CD8-positive, alpha-beta T cell (primary cell): ENCODE measurements at regions of chr14 and their contacts with region 1.

Region 1: GRCh38 chr14:91350813-91351511 is 66.7 kb downstream of the CCDC88C start:
- DNase-seq: peak in 6 of 9 experiments; percentile 52 to 91 (median 72)
- ATAC-seq: peak; percentile 60
- H3K4me3 ChIP-seq: peak overlapping the region; percentile 27 to 39
- H3K4me3 Mint-ChIP-seq: peak overlapping the region; percentile 86
- H3K27ac ChIP-seq: peak overlapping the region; percentile 45 to 83
- H3K27ac Mint-ChIP-seq: peak overlapping the region; percentile 94
- H3K4me1 ChIP-seq: peaks cover 89% of the 10 kb centered on the region
- H3K4me1 Mint-ChIP-seq: peaks cover 90% of the 10 kb centered on the region
- H3K27me3 ChIP-seq: no peaks in the 10 kb centered on the region
- H3K27me3 Mint-ChIP-seq: no peaks in the 10 kb centered on the region
- CTCF ChIP-seq: no peak

Region 2: GRCh38 chr14:91332151-91332985 is 18.6 kb before region 1 on chr14:
- CTCF ChIA-PET with region 1: interaction called, 161 read pairs
- POLR2A ChIA-PET with region 1: interaction called, 11 read pairs
- intact Hi-C with region 1: no loop called
- DNase-seq: no peak
- ATAC-seq: no peak
- H3K4me3 ChIP-seq: no peak overlapping the region
- H3K4me3 Mint-ChIP-seq: peak overlapping the region; percentile 29
- H3K27ac ChIP-seq: peak overlapping the region; percentile 33 to 95
- H3K27ac Mint-ChIP-seq: peak overlapping the region; percentile 99
- H3K4me1 ChIP-seq: peaks cover 63% of the 10 kb centered on the region
- H3K4me1 Mint-ChIP-seq: peaks cover 70% of the 10 kb centered on the region
- H3K27me3 ChIP-seq: no peaks in the 10 kb centered on the region
- H3K27me3 Mint-ChIP-seq: no peaks in the 10 kb centered on the region
- CTCF ChIP-seq: no peak

Region 3: DNA sequence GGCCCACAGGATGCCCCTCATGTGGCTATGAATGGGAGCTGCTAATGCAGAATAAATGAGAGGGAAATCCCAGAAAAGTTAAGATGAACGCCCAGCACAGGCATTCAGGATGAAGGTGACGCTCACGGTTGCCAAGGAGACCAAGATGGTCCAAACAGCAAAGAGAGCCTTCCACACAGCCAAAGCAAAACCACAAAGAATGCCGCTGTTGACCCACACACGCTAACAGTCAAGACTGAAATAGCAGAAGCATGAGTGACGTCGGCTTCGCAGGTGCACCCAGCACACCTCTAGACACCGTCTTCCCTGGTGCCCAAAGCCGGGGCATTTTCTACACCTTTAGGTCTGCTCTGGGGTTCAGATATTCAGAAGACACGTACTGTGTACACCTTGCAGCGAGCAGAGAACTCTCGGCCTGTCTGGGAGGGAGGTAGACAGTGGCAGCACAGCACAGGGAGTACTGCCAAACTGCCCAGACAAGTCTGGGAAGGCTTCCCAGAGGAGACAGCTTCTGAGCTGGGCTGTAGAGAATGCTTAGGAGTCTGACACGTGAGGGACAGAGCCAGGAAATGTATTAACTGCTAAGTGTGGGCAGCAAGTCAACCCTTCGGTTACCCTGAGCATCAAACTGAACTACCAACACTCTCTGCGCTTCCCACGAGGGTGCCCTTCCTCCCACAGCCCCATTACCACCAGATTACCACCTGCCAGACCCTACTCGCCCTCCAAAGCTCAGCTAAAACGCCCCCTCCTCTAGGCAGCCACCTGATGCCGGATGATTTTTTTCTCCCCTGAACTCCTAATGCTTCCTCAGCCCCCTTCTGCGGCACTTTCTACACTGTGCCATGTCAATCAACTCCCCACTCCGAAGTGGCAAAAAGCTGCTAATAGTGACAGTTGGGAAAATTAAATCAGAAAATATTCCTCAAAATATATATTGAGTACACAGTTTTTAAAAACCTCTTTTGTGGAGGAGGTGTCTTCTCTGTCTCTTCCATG is 16.5 kb after region 1 on chr14:
- CTCF ChIA-PET with region 1: interaction called, 120 read pairs
- POLR2A ChIA-PET with region 1: interaction called, 24 read pairs
- intact Hi-C with region 1: loop called in 1 of 2 experiments (anchors 1 kb)
- DNase-seq: peak in 7 of 9 experiments; percentile 41 to 96 (median 77)
- ATAC-seq: peak; percentile 77
- H3K4me3 ChIP-seq: peak overlapping the region; percentile 18 to 42
- H3K4me3 Mint-ChIP-seq: peak overlapping the region; percentile 73
- H3K27ac ChIP-seq: peak overlapping the region; percentile 67 to 79
- H3K27ac Mint-ChIP-seq: peak overlapping the region; percentile 93
- H3K4me1 ChIP-seq: peaks cover 97% of the 10 kb centered on the region
- H3K4me1 Mint-ChIP-seq: peaks cover 86% of the 10 kb centered on the region
- H3K27me3 ChIP-seq: no peaks in the 10 kb centered on the region
- H3K27me3 Mint-ChIP-seq: no peaks in the 10 kb centered on the region
- CTCF ChIP-seq: no peak

Region 4: GRCh38 chr14:91373591-91374254 is 22.8 kb after region 1 on chr14:
- CTCF ChIA-PET with region 1: interaction called, 120 read pairs
- POLR2A ChIA-PET with region 1: interaction called, 24 read pairs
- intact Hi-C with region 1: loop called in 1 of 2 experiments (anchors 2 kb)
- DNase-seq: peak in 7 of 9 experiments; percentile 38 to 87 (median 65)
- ATAC-seq: peak; percentile 53
- H3K4me3 ChIP-seq: peak overlapping the region; percentile 45 to 58
- H3K4me3 Mint-ChIP-seq: peak overlapping the region; percentile 87
- H3K27ac ChIP-seq: peak overlapping the region; percentile 57 to 79
- H3K27ac Mint-ChIP-seq: peak overlapping the region; percentile 95
- H3K4me1 ChIP-seq: peaks cover 98% of the 10 kb centered on the region
- H3K4me1 Mint-ChIP-seq: peaks cover 99% of the 10 kb centered on the region
- H3K27me3 ChIP-seq: no peaks in the 10 kb centered on the region
- H3K27me3 Mint-ChIP-seq: no peaks in the 10 kb centered on the region
- CTCF ChIP-seq: no peak

Region 5: GRCh38 chr14:91396959-91397815 is 46.2 kb after region 1 on chr14:
- CTCF ChIA-PET with region 1: interaction called, 49 read pairs
- POLR2A ChIA-PET with region 1: interaction called, 33 read pairs
- intact Hi-C with region 1: loop called in 1 of 2 experiments (anchors 5 kb)
- DNase-seq: peak in 7 of 9 experiments; percentile 58 to 81 (median 69)
- ATAC-seq: peak; percentile 55
- H3K4me3 ChIP-seq: peak overlapping the region; percentile 29 to 41
- H3K4me3 Mint-ChIP-seq: peak overlapping the region; percentile 81
- H3K27ac ChIP-seq: peak overlapping the region; percentile 42 to 78
- H3K27ac Mint-ChIP-seq: peak overlapping the region; percentile 90
- H3K4me1 ChIP-seq: peaks cover 92% of the 10 kb centered on the region
- H3K4me1 Mint-ChIP-seq: peaks cover 89% of the 10 kb centered on the region
- H3K27me3 ChIP-seq: no peaks in the 10 kb centered on the region
- H3K27me3 Mint-ChIP-seq: no peaks in the 10 kb centered on the region
- CTCF ChIP-seq: no peak

Region 6: GRCh38 chr14:91402771-91403600 is 52.0 kb after region 1 on chr14:
- CTCF ChIA-PET with region 1: interaction called, 49 read pairs
- POLR2A ChIA-PET with region 1: interaction called, 33 read pairs
- intact Hi-C with region 1: loop called (anchors 2 to 5 kb)
- DNase-seq: peak in 3 of 9 experiments; percentile 54 to 70 (median 60)
- ATAC-seq: peak; percentile 32
- H3K4me3 ChIP-seq: peak overlapping the region; percentile 39 to 43
- H3K4me3 Mint-ChIP-seq: peak overlapping the region; percentile 80
- H3K27ac ChIP-seq: peak overlapping the region; percentile 60 to 89
- H3K27ac Mint-ChIP-seq: peak overlapping the region; percentile 94
- H3K4me1 ChIP-seq: peaks cover 92% of the 10 kb centered on the region
- H3K4me1 Mint-ChIP-seq: peaks cover 88% of the 10 kb centered on the region
- H3K27me3 ChIP-seq: no peaks in the 10 kb centered on the region
- H3K27me3 Mint-ChIP-seq: no peaks in the 10 kb centered on the region
- CTCF ChIP-seq: no peak

Region 7: GRCh38 chr14:91493169-91493568 is 142.2 kb after region 1 on chr14:
- CTCF ChIA-PET with region 1: no interaction called
- POLR2A ChIA-PET with region 1: no interaction called
- intact Hi-C with region 1: no loop called
- DNase-seq: no peak
- ATAC-seq: no peak
- H3K4me3 ChIP-seq: no peak overlapping the region
- H3K4me3 Mint-ChIP-seq: no peak overlapping the region
- H3K27ac ChIP-seq: no peak overlapping the region
- H3K27ac Mint-ChIP-seq: no peak overlapping the region
- H3K4me1 ChIP-seq: peaks cover 55% of the 10 kb centered on the region
- H3K4me1 Mint-ChIP-seq: peaks cover 71% of the 10 kb centered on the region
- H3K27me3 ChIP-seq: no peaks in the 10 kb centered on the region
- H3K27me3 Mint-ChIP-seq: no peaks in the 10 kb centered on the region
- CTCF ChIP-seq: no peak